Common myeloid progenitor, CD34-positive (primary cell): ENCODE measurements at regions of chr12 and their contacts with region 1.

Region 1: DNA sequence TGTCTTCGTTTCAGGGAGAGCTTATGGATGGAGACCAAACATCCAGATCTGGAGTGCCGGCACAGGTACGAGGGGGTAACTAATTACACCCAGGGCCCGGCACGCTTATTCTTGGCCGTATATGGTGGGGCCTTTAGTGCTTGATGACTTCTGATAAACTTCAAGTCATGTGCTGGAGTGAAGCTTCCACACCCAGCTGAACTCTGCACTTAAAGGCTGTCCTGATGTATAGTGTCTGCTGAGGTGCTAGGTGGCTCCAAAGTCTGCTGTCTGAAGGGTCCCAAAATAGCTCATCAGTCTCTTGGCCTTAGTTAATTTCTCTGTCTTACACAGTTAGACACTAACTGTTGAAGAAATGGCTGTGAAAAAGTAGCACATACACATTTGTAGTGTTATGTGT is 17.9 kb downstream of the RNF34 start:
- DNase-seq: no peak
- H3K4me3 ChIP-seq: no peak overlapping the region
- H3K27ac ChIP-seq: peak overlapping the region in 1 of 2 experiments; percentile 25
- H3K4me1 ChIP-seq: no peaks in the 10 kb centered on the region
- H3K27me3 ChIP-seq: no peaks in the 10 kb centered on the region

Region 2: GRCh38 chr12:121404734-121405133 is 13.1 kb before region 1 on chr12:
- CTCF ChIA-PET with region 1: interaction called, 15 read pairs
- POLR2A ChIA-PET with region 1: interaction called, 3 read pairs
- DNase-seq: peak in 2 of 3 donors; percentile 10 to 17
- H3K4me3 ChIP-seq: no peak overlapping the region
- H3K27ac ChIP-seq: no peak overlapping the region
- H3K4me1 ChIP-seq: peaks cover 7 to 16% (median 13%) of the 10 kb centered on the region in 4 experiments
- H3K27me3 ChIP-seq: no peaks in the 10 kb centered on the region